MCF 10A (cell line): ENCODE measurements at regions of chr20 and their contacts with region 1.

Region 1: GRCh38 chr20:53915446-53916172 is 154.8 kb downstream of the BCAS1 start:
- DNase-seq: peak; percentile 94
- H3K4me3 Mint-ChIP-seq: peak overlapping the region; percentile 76
- H3K27ac Mint-ChIP-seq: peak overlapping the region; percentile 89
- H3K4me1 Mint-ChIP-seq: peaks cover 37% of the 10 kb centered on the region
- H3K27me3 Mint-ChIP-seq: no peaks in the 10 kb centered on the region
- CTCF ChIP-seq: peak; percentile 75

Region 2: GRCh38 chr20:53611449-53611894 is 304.1 kb before region 1 on chr20:
- CTCF ChIA-PET with region 1: interaction called, 19 read pairs
- POLR2A ChIA-PET with region 1: interaction called, 7 read pairs
- intact Hi-C with region 1: no loop called
- DNase-seq: peak; percentile 82
- H3K4me3 Mint-ChIP-seq: peak overlapping the region; percentile 47
- H3K27ac Mint-ChIP-seq: peak overlapping the region; percentile 82
- H3K4me1 Mint-ChIP-seq: peaks cover 12% of the 10 kb centered on the region
- H3K27me3 Mint-ChIP-seq: no peaks in the 10 kb centered on the region
- CTCF ChIP-seq: no peak

Region 3: GRCh38 chr20:53657732-53658131 is 257.9 kb before region 1 on chr20:
- CTCF ChIA-PET with region 1: interaction called, 10 read pairs
- POLR2A ChIA-PET with region 1: interaction called, 4 read pairs
- intact Hi-C with region 1: no loop called
- DNase-seq: no peak
- H3K4me3 Mint-ChIP-seq: no peak overlapping the region
- H3K27ac Mint-ChIP-seq: peak overlapping the region; percentile 79
- H3K4me1 Mint-ChIP-seq: peaks cover 24% of the 10 kb centered on the region
- H3K27me3 Mint-ChIP-seq: no peaks in the 10 kb centered on the region
- CTCF ChIP-seq: no peak

Region 4: DNA sequence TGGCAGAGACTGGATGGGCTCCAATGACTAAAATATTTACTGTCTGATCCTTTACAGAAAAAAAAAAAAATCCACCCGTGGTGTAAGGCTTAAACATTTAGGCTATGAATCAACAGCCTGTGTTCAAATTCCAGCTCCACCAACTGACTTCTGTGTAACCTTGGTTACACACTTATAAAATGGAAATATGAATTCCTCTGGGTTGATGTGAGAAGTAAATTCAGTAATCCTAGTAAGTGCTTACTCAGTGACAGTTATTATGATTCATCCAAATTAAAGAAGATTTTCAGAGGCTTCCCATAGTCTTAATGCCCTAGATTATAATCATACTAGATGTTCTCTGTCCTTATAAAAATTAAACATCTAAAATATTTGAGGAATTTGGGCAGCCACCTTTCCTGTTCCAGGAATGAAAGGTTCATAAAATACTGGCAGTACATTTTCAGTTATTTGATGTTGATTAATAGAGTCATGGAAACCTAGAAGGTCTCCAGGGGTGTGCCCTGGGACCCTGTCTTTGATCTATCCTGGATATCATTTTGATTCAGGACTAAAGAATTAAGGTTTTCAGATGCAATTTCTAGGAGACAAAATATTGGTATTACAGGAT is 141.7 kb before region 1 on chr20:
- CTCF ChIA-PET with region 1: interaction called, 3 read pairs
- POLR2A ChIA-PET with region 1: interaction called, 3 read pairs
- intact Hi-C with region 1: loop called (anchors 5 kb)
- DNase-seq: peak; percentile 79
- H3K4me3 Mint-ChIP-seq: no peak overlapping the region
- H3K27ac Mint-ChIP-seq: peak overlapping the region; percentile 92
- H3K4me1 Mint-ChIP-seq: peaks cover 21% of the 10 kb centered on the region
- H3K27me3 Mint-ChIP-seq: no peaks in the 10 kb centered on the region
- CTCF ChIP-seq: no peak

Region 5: GRCh38 chr20:53899351-53900167 is 16.1 kb before region 1 on chr20:
- CTCF ChIA-PET with region 1: interaction called, 62 read pairs
- POLR2A ChIA-PET with region 1: interaction called, 14 read pairs
- intact Hi-C with region 1: no loop called
- DNase-seq: peak; percentile 89
- H3K4me3 Mint-ChIP-seq: peak overlapping the region; percentile 39
- H3K27ac Mint-ChIP-seq: peak overlapping the region; percentile 75
- H3K4me1 Mint-ChIP-seq: peaks cover 27% of the 10 kb centered on the region
- H3K27me3 Mint-ChIP-seq: no peaks in the 10 kb centered on the region
- CTCF ChIP-seq: no peak

Region 6: DNA sequence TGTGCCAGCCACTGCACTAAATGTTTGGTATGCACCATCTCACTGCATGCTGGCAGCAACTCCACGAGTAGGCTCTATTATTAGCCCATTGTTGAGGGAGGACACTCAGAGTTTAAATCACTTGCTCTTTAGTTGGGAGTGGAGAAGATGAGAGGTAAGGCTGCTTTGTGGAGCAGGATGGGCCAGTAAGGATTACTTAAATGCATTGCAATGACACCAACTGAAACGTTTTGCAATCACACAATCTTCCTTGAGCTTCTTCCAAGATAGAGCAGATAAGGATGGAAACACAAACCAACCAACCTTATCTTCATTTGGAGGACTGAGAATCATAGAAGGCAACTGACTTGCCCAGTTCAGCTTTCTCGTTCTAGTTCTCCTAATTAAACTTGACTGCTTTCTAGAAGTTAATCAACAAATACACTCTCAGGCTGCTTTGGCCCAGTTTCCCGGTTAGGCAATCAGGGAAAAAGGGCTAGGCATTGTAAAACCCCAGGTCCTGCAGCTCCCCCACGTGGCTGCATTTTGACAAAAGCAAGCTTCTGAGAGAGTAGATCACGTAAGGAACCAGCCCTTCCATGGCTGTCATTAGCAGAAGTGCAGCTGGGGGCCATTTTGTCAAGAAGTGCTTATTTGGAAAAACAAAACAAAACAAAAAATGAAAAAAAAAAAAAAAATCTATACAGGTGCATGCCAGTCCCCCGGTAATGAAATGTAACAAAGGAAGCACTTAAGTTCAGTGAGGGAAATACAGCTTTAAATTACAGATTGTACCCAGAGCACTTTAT is 24.2 kb after region 1 on chr20:
- CTCF ChIA-PET with region 1: interaction called, 81 read pairs
- POLR2A ChIA-PET with region 1: interaction called, 28 read pairs
- intact Hi-C with region 1: loop called (anchors 1 kb)
- DNase-seq: peak; percentile 95
- H3K4me3 Mint-ChIP-seq: no peak overlapping the region
- H3K27ac Mint-ChIP-seq: peak overlapping the region; percentile 18
- H3K4me1 Mint-ChIP-seq: peaks cover 19% of the 10 kb centered on the region
- H3K27me3 Mint-ChIP-seq: no peaks in the 10 kb centered on the region
- CTCF ChIP-seq: peak; percentile 73

Region 7: DNA sequence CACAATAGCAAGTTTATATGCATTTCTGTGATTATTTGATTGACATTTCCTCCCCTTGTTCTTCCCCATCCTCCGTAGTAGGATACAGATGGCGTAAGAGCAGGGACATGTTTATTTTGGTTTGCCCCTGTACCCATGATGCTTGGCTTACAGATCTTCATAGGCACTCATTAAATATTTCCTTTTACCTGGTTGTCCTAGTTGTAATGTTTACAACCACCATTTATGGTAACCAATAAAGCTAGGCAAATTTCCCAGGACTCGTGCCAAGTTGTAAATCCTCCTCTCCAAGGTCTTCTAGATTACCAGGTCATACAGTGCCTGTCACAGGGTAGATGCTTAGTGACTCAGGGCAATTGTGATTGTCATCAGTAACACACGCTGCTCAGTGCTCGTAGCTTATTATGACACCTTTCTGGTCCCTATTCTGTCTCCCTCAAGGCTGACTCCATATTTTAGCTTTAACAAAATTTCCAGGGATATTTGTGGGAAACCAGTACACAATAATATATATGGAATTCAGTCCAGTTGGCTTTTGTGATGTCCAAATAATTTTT is 233.4 kb after region 1 on chr20:
- CTCF ChIA-PET with region 1: no interaction called
- POLR2A ChIA-PET with region 1: no interaction called
- intact Hi-C with region 1: no loop called
- DNase-seq: peak; percentile 35
- H3K4me3 Mint-ChIP-seq: no peak overlapping the region
- H3K27ac Mint-ChIP-seq: no peak overlapping the region
- H3K4me1 Mint-ChIP-seq: peaks cover 6% of the 10 kb centered on the region
- H3K27me3 Mint-ChIP-seq: no peaks in the 10 kb centered on the region
- CTCF ChIP-seq: no peak

Region 8: GRCh38 chr20:54199721-54200176 is 284.1 kb after region 1 on chr20:
- CTCF ChIA-PET with region 1: interaction called, 19 read pairs
- POLR2A ChIA-PET with region 1: no interaction called
- intact Hi-C with region 1: no loop called
- DNase-seq: peak; percentile 77
- H3K4me3 Mint-ChIP-seq: no peak overlapping the region
- H3K27ac Mint-ChIP-seq: no peak overlapping the region
- H3K4me1 Mint-ChIP-seq: peaks cover 19% of the 10 kb centered on the region
- H3K27me3 Mint-ChIP-seq: no peaks in the 10 kb centered on the region
- CTCF ChIP-seq: peak; percentile 91

Region 9: GRCh38 chr20:54680872-54681619 is 765.4 kb after region 1 on chr20:
- CTCF ChIA-PET with region 1: no interaction called
- POLR2A ChIA-PET with region 1: no interaction called
- intact Hi-C with region 1: no loop called
- DNase-seq: peak; percentile 52
- H3K4me3 Mint-ChIP-seq: no peak overlapping the region
- H3K27ac Mint-ChIP-seq: no peak overlapping the region
- H3K4me1 Mint-ChIP-seq: peaks cover 6% of the 10 kb centered on the region
- H3K27me3 Mint-ChIP-seq: peaks cover 63% of the 10 kb centered on the region
- CTCF ChIP-seq: peak; percentile 71

Region 10: DNA sequence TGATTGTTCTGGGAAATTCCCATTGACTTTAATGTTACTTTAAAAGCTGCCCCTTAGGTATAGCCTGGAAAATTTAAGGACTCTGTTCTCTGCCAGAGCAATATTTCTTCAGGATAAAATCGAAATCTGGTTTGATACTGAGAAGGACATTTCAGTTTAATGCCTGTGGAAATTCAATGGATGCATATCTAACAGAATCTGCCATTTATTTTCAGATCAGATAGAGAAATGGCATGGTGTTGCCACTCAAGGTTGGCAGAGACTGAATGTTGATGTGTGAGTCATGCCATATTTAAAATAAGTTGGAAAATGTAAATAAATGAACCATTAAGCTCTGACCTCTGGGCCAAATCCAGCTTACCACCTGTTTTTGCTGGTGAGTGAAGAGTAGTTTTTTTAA is 1154.3 kb after region 1 on chr20:
- CTCF ChIA-PET with region 1: no interaction called
- POLR2A ChIA-PET with region 1: no interaction called
- intact Hi-C with region 1: no loop called
- DNase-seq: no peak
- H3K4me3 Mint-ChIP-seq: no peak overlapping the region
- H3K27ac Mint-ChIP-seq: no peak overlapping the region
- H3K4me1 Mint-ChIP-seq: no peaks in the 10 kb centered on the region
- H3K27me3 Mint-ChIP-seq: no peaks in the 10 kb centered on the region
- CTCF ChIP-seq: no peak